ENCODE measurements at regions of chr11 and their contacts with region 1.

Region 1: GRCh38 chr11:85826116-85826855 is 15.3 kb upstream of the SYTL2 start:
- DNase-seq: peak; percentile 42
- ATAC-seq: no peak
- H3K4me3 Mint-ChIP-seq: no peak overlapping the region
- H3K27ac Mint-ChIP-seq: peak overlapping the region; percentile 37
- H3K4me1 Mint-ChIP-seq: peaks cover 58% of the 10 kb centered on the region
- H3K27me3 Mint-ChIP-seq: peaks cover 3% of the 10 kb centered on the region

Region 2: GRCh38 chr11:85800595-85801342 is 25.5 kb before region 1 on chr11:
- CTCF ChIA-PET with region 1: no interaction called
- POLR2A ChIA-PET with region 1: no interaction called
- DNase-seq: no peak
- ATAC-seq: no peak
- H3K4me3 Mint-ChIP-seq: no peak overlapping the region
- H3K27ac Mint-ChIP-seq: no peak overlapping the region
- H3K4me1 Mint-ChIP-seq: peaks cover 23% of the 10 kb centered on the region
- H3K27me3 Mint-ChIP-seq: no peaks in the 10 kb centered on the region

Region 3: DNA sequence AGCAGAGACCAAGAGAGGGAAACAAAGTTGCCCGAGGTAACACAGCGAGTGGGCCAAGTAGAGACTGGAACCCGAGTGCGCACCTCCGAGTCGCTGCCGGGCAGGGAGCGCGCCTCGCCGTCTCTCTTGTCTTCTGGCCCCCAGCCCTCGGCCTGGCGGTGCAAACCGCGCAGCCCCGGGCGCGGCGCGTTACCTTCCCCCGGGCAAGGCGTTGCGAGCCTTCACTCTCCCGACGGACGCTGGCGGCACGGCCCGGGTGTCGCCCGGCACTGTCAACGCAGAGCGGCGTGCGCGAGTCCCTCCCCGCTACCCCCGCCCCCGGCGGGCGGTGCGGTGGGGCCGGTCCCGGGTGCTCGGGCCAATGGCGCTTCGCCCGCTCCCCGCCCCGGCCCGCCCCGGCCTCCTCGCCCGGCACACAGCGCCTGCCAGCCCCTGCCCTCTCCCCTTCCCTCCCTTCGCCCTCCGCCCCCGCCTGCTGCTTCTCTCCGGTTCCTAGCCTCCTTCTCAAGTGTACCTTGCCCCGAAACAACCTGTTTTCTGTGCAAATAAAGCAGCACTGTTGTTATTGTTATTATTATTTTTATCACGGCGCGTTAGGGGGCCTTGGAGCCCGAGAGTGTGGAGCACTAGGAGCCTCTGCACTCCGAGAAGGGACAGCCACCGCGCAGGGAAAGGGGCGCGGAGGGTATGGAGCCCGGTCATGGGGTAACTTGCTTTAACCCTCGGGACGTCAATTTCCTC is 15.2 kb before region 1 on chr11 and contains the start of gene SYTL2:
- CTCF ChIA-PET with region 1: interaction called, 19 read pairs
- POLR2A ChIA-PET with region 1: interaction called, 5 read pairs
- DNase-seq: peak; percentile 77
- ATAC-seq: peak; percentile 97
- H3K4me3 Mint-ChIP-seq: peak within 1 kb of the TSS; percentile 87
- H3K27ac Mint-ChIP-seq: peak within 1 kb of the TSS; percentile 78
- H3K4me1 Mint-ChIP-seq: peaks cover 39% of the 10 kb centered on the region
- H3K27me3 Mint-ChIP-seq: peaks cover 20% of the 10 kb centered on the region
- total RNA-seq, gene SYTL2: 29.3 to 31.2 TPM

Region 4: DNA sequence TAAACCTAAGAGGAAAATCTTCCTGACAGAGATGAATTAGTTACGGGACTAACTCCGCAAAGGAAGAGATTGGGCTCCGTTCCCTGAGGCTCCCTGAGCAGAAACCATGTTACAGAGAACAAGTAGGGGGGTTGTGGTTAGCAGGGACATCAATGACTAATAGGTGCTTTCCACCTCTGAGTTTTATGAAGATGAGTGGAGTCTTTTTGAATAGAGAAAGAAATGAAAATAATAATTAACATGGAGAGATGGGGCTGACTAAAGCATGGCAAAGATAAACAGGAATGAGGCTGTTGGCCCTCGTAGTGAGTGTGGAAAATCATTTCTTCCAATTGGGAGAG is 290.1 kb after region 1 on chr11:
- CTCF ChIA-PET with region 1: no interaction called
- POLR2A ChIA-PET with region 1: no interaction called
- DNase-seq: no peak
- ATAC-seq: peak; percentile 76
- H3K4me3 Mint-ChIP-seq: no peak overlapping the region
- H3K27ac Mint-ChIP-seq: no peak overlapping the region
- H3K4me1 Mint-ChIP-seq: peaks cover 19% of the 10 kb centered on the region
- H3K27me3 Mint-ChIP-seq: peaks cover 2% of the 10 kb centered on the region

Measured in activated CD8-positive, alpha-beta T cell treated with anti-CD3 and anti-CD28 coated beads, Interleukin-2, amount 10 ng/mL, durations not matched to agents 7 days and 5 days (primary cell).